GM23248 (cell line): ENCODE measurements at regions of chr3 and their contacts with region 1.

Region 1: GRCh38 chr3:172836390-172836997 is 86.0 kb downstream of the ECT2 start:
- DNase-seq: peak; percentile 53
- H3K4me3 ChIP-seq: no peak overlapping the region
- H3K27ac ChIP-seq: no peak overlapping the region
- H3K4me1 ChIP-seq: no peaks in the 10 kb centered on the region
- H3K27me3 ChIP-seq: peaks cover 35% of the 10 kb centered on the region

Region 2: DNA sequence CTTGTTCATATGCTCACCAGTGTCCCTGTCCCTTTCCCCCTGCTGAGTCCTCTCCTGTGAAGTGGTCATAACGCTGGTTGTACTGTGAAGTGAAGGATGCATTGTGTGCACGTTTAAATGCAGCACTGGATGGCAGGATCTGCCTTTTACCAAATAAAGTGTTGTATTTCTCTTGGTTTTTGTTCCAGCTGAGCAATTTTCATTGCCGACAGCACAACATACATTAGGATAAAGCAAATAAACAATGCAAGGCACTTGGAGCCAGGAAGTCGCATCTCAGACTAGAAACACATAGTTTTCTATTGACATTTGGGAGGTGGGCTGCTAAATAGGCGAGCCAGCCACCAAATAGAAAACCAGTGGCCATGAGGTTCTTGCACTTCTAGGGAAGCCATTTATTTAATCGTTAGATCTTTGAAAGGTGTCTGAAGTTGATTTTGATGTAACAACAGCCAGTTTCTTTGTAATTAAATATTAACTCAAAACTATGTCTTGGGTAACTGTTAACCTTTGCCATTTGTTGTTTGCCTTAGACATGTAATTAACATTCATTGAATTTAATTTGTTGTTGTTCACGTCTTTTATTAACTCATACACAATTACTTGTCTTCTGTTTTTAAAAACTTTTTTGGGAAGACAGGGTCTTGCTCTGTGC is 611.8 kb before region 1 on chr3:
- in situ Hi-C with region 1: no loop called
- DNase-seq: no peak
- H3K4me3 ChIP-seq: no peak overlapping the region
- H3K27ac ChIP-seq: no peak overlapping the region
- H3K4me1 ChIP-seq: peaks cover 37% of the 10 kb centered on the region
- H3K27me3 ChIP-seq: no peaks in the 10 kb centered on the region

Region 3: DNA sequence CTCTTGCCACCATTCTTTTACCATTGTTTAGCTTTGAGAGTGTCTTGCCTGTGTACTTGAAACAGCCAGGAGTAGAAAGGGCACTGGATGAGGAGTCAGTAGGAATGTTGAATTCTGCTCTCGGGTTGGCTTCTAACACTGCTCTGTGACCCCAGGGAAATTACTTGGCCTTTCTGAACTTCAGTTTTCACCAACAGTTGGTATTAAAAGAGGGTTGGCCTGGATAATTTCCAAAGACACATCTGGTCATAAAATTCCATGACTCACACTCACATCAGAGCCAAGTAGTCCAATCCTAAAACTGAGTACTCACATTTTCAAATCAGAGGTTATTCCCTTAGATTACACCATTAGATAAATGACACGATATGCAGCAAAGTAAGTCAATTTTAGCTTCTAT is 55.7 kb after region 1 on chr3:
- in situ Hi-C with region 1: no loop called
- DNase-seq: peak; percentile 50
- H3K4me3 ChIP-seq: no peak overlapping the region
- H3K27ac ChIP-seq: no peak overlapping the region
- H3K4me1 ChIP-seq: no peaks in the 10 kb centered on the region
- H3K27me3 ChIP-seq: no peaks in the 10 kb centered on the region

Region 4: GRCh38 chr3:173045770-173046382 is 209.4 kb after region 1 on chr3:
- in situ Hi-C with region 1: loop called (anchors 10 kb)
- DNase-seq: peak; percentile 30
- H3K4me3 ChIP-seq: no peak overlapping the region
- H3K27ac ChIP-seq: no peak overlapping the region
- H3K4me1 ChIP-seq: no peaks in the 10 kb centered on the region
- H3K27me3 ChIP-seq: peaks cover 19% of the 10 kb centered on the region